ENCODE measurements at regions of chr17 and their contacts with region 1.

Region 1: GRCh38 chr17:1724506-1725362 is at the start of gene WDR81:
- DNase-seq: peak; percentile 94 to 95
- H3K4me3 ChIP-seq: peak within 1 kb of the TSS; percentile 75 to 85
- H3K27ac ChIP-seq: peak within 1 kb of the TSS; percentile 78 to 86
- H3K4me1 ChIP-seq: peaks cover 0 to 42% (median 26%) of the 10 kb centered on the region in 4 donors
- H3K27me3 ChIP-seq: no peaks in the 10 kb centered on the region
- CTCF ChIP-seq: no peak

Region 2: DNA sequence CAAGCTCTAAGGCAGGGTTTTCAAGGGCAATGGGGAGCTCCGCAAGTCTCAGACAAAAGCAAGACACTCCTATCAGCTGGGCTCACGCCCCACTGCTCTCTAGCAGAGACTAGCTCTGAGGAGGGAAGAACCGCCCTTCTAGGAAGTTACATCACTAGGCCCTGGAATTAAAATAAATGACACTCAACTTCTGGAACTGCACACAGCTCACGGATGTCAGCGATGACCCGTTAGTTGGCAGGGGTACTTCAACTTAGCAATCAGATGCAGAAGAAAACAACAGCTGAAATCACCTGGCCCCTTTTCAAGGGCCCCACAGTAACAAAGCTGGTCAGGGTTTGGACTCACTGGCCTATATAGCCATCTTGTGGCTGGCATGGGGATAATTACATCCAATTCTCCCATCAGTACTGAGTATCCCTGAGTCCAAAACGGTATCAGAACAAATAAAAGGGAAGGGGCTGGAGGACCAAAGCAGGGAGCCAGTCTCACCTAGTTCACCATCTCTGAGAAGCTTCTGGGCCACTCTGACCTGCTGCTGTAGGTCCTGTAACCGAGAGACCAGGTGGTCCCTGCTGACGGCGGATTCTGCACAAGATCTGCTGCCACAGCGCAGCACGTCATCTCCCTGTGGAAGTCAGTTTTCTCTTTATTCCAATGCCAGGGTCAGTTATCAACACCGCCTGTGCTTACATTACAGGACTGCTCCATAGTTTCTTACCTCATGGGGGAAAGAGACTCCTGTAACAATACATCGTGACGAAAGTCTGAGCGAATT is 59.3 kb after region 1 on chr17:
- intact Hi-C with region 1: loop called (anchors 2 kb)
- DNase-seq: peak; percentile 96 to 97
- H3K4me3 ChIP-seq: peak overlapping the region; percentile 23
- H3K27ac ChIP-seq: peak overlapping the region; percentile 95 to 99
- H3K4me1 ChIP-seq: peaks cover 0 to 90% (median 64%) of the 10 kb centered on the region in 4 donors
- H3K27me3 ChIP-seq: no peaks in the 10 kb centered on the region
- CTCF ChIP-seq: peak; percentile 72 to 92

Region 3: GRCh38 chr17:1829592-1830257 is 105.0 kb after region 1 on chr17 and contains the starts of genes RPA1 and SMYD4:
- intact Hi-C with region 1: loop called (anchors 10 kb)
- DNase-seq: peak; percentile 82 to 93
- H3K4me3 ChIP-seq: peak within 1 kb of the TSS; percentile 71 to 74
- H3K27ac ChIP-seq: peak within 1 kb of the TSS; percentile 81 to 93
- H3K4me1 ChIP-seq: peaks cover 0 to 32% (median 16%) of the 10 kb centered on the region in 4 donors
- H3K27me3 ChIP-seq: no peaks in the 10 kb centered on the region
- CTCF ChIP-seq: peak in 1 of 2 experiments; percentile 17

Measured in tibial artery (tissue), 4 donors.